ENCODE measurements at regions of chr6 and their contacts with region 1.

Region 1: DNA sequence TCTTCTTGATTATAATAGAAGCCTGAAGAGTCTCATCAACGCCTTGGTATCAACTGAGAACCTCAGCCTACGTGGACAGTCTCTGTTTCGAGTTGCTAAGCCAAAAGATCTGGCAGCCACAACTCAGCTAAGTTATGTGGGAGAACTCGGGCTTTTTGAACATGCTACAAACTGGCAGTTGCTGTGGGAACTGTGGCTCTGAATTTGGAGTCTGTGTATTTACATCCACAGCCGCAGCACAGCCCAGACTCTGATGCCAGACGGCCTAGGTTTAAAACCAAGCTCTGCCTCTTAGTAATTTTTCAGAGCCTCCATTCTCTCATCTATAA is 35.8 kb downstream of the RIPOR2 start:
- DNase-seq: peak; percentile 39
- H3K4me3 Mint-ChIP-seq: peak overlapping the region; percentile 33
- H3K27ac Mint-ChIP-seq: peak overlapping the region; percentile 66
- H3K4me1 Mint-ChIP-seq: peaks cover 82% of the 10 kb centered on the region
- H3K27me3 Mint-ChIP-seq: no peaks in the 10 kb centered on the region

Region 2: DNA sequence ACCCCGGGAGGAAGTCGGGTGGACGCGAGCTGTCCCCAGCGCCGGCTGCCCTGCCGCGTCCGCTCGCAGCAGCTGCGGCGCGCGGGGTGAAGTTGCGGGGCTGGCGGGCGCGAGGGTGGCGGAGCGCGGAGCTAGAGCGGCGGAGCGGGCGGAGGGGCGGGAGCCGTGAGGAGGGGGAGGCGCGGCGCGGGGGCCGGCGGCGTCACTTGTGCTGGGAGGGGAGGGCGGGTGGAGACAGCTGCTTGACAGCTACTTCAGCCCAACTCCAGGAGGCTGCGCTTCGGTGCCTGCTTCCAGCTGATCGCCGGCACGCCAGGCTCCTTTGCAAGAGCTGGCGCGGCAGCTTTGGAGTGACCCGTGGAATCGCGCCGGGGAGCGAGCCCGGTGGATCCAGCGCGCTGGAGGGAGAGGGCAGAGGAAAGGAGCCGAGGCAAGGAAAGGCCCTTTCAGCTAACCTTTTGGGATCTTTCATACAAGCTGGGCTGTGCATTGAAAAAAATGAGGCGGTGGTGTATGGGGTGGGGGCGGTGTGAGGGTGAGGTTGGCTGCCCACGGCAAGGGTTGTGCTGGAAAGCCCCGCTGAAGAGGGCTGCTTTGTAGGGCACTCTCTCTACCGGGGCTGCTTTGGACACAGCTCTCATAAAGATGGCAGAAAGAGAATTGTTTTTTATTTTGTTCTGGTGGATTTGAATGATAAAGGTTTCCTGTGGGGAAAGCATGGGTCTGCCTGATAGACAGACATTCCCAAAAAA is 11.2 kb after region 1 on chr6:
- CTCF ChIA-PET with region 1: interaction called, 35 read pairs
- POLR2A ChIA-PET with region 1: interaction called, 3 read pairs
- DNase-seq: no peak
- H3K4me3 Mint-ChIP-seq: peak overlapping the region; percentile 85
- H3K27ac Mint-ChIP-seq: peak overlapping the region; percentile 90
- H3K4me1 Mint-ChIP-seq: peaks cover 94% of the 10 kb centered on the region
- H3K27me3 Mint-ChIP-seq: no peaks in the 10 kb centered on the region

Region 3: GRCh38 chr6:24960991-24961475 is 61.1 kb after region 1 on chr6:
- CTCF ChIA-PET with region 1: no interaction called
- POLR2A ChIA-PET with region 1: no interaction called
- DNase-seq: no peak
- H3K4me3 Mint-ChIP-seq: no peak overlapping the region
- H3K27ac Mint-ChIP-seq: peak overlapping the region; percentile 81
- H3K4me1 Mint-ChIP-seq: peaks cover 71% of the 10 kb centered on the region
- H3K27me3 Mint-ChIP-seq: no peaks in the 10 kb centered on the region